OCI-LY7 (cell line): ENCODE measurements at regions of chr15 and their contacts with region 1.

Region 1: GRCh38 chr15:72117486-72118399 is at the start of gene MYO9A:
- DNase-seq: peak; percentile 99
- H3K4me3 ChIP-seq: peak within 1 kb of the TSS; percentile 79
- H3K27ac ChIP-seq: peak within 1 kb of the TSS; percentile 71
- H3K4me1 ChIP-seq: peaks cover 20% of the 10 kb centered on the region
- CTCF ChIP-seq: peak; percentile 33
- total RNA-seq, gene MYO9A: 26.2 and 26.4 TPM in 2 replicates

Region 2: GRCh38 chr15:72070817-72071447 is 46.8 kb before region 1 on chr15:
- CTCF ChIA-PET with region 1: no interaction called
- POLR2A ChIA-PET with region 1: interaction called, 9 read pairs
- intact Hi-C with region 1: loop called (anchors 1 kb)
- DNase-seq: peak; percentile 52
- H3K4me3 ChIP-seq: peak overlapping the region; percentile 59
- H3K27ac ChIP-seq: peak overlapping the region; percentile 76
- H3K4me1 ChIP-seq: peaks cover 74% of the 10 kb centered on the region
- CTCF ChIP-seq: no peak

Region 3: DNA sequence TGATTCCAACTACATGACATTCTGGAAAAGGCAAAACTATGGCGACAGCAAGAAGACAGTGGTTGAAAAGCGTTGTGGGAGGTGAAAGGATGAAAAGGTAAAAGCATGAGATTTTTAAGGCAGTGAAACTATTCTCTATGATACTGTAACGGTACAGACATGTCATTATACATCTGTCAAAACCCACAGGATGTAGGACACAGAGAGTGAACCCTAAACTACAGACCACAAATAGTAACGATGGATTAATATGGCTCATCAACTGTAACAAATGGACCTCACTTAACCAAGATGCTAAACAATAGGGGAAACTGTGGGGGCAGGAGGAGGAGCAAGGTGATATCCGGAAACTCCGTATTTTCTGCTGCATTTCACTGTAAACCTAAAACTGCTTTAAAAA is 38.9 kb before region 1 on chr15:
- CTCF ChIA-PET with region 1: no interaction called
- POLR2A ChIA-PET with region 1: interaction called, 9 read pairs
- intact Hi-C with region 1: loop called (anchors 1 kb)
- DNase-seq: peak; percentile 85
- H3K4me3 ChIP-seq: peak overlapping the region; percentile 58
- H3K27ac ChIP-seq: peak overlapping the region; percentile 95
- H3K4me1 ChIP-seq: peaks cover 70% of the 10 kb centered on the region
- CTCF ChIP-seq: no peak

Region 4: DNA sequence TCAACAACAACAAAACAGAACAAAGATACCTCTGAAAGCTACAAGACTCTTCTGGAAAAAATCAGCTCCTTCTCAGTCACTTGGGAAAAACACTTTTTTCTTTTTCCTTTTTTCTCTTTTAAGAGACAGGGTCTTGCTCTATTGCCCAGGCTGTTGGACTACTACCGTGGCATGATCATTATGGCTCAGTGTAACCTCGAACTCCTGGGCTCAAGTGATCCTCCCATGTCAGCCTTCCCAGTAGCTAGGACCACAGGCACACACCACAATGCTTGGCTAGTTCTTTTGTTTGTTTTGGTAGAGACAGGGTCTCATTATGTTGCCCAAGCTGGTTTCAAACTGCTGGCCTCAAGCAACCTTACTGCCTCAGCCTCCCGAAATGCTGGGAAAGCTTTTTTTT is 12.6 kb before region 1 on chr15:
- CTCF ChIA-PET with region 1: interaction called, 4 read pairs
- POLR2A ChIA-PET with region 1: interaction called, 13 read pairs
- intact Hi-C with region 1: no loop called
- DNase-seq: no peak
- H3K4me3 ChIP-seq: no peak overlapping the region
- H3K27ac ChIP-seq: peak overlapping the region; percentile 28
- H3K4me1 ChIP-seq: peaks cover 56% of the 10 kb centered on the region
- CTCF ChIP-seq: no peak

Region 5: DNA sequence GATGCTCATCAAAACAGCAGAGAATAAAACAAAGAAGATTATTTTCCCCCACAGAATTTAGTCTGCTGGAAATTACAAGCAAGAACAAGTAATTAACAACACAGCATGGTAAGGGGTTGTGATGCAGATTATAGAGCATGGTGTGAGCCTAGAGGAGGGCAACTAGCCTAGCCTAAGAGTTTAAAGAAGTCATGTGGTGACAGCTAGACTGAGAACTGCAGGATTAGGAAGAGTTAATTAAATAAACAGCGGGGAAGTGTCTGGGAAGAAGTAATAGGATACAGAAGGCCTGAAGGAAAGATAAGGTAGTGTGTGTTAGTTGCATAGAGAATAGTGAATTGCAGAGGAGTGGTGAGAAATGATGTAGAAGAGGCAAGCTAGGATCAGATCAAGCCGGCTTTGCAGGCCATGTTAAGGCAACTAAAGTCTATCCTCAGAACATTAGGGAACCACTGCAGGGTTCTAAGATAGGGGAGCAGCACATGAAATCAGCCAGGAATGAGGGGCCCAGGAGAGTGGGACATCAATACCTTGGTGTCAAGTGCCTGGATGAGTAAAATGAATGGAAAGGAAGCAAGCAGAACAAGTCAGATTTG is 125.1 kb after region 1 on chr15:
- CTCF ChIA-PET with region 1: no interaction called
- POLR2A ChIA-PET with region 1: no interaction called
- intact Hi-C with region 1: no loop called
- DNase-seq: no peak
- H3K4me3 ChIP-seq: no peak overlapping the region
- H3K27ac ChIP-seq: no peak overlapping the region
- H3K4me1 ChIP-seq: no peaks in the 10 kb centered on the region
- CTCF ChIP-seq: no peak

Region 6: GRCh38 chr15:72272213-72273002 is 154.7 kb after region 1 on chr15 and contains the start of gene PARP6:
- CTCF ChIA-PET with region 1: no interaction called
- POLR2A ChIA-PET with region 1: no interaction called
- intact Hi-C with region 1: loop called (anchors 5 kb)
- DNase-seq: peak; percentile 97
- H3K4me3 ChIP-seq: peak within 1 kb of the TSS; percentile 97
- H3K27ac ChIP-seq: peak within 1 kb of the TSS; percentile 42
- H3K4me1 ChIP-seq: peaks cover 25% of the 10 kb centered on the region
- CTCF ChIP-seq: peak; percentile 78
- total RNA-seq, gene PARP6: 53.6 and 58.3 TPM in 2 replicates